ENCODE measurements at regions of chr6 and their contacts with region 1.

Region 1: DNA sequence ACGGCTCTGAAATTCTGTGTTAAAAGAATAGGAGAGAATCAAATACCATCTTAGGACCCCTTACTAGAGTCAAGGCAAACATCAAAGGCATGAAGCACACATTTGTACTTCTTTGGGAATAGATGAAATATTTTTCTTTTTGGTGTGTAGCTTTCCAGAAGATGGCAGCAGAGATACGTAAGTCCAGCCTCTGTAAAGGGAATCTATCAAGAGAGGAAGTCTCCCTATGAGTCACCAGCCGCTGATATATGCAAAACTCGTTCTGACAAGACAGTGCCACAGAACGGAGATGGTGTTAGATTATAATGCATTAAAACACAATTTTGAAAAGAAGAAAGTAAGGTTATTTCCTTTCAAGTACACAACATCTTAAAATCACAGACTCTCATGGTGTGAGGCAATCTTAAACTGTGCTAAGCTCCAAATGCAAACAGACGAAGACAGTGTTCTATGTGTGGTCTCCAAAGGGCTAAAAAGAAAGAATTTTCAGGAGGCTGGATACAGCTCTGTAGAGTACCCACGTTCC is 120.0 kb upstream of the AGPAT4 start:
- DNase-seq: peak; percentile 23 to 84
- ATAC-seq: peak; percentile 95 to 98 (median 97)
- H3K4me3 ChIP-seq: no peak overlapping the region
- H3K4me3 Mint-ChIP-seq: no peak overlapping the region
- H3K27ac ChIP-seq: peak overlapping the region; percentile 41
- H3K27ac Mint-ChIP-seq: no peak overlapping the region
- H3K4me1 ChIP-seq: peaks cover 15% of the 10 kb centered on the region
- H3K4me1 Mint-ChIP-seq: peaks cover 7 to 8% of the 10 kb centered on the region in 2 donors
- H3K27me3 ChIP-seq: no peaks in the 10 kb centered on the region
- H3K27me3 Mint-ChIP-seq: peaks cover 3 to 23% of the 10 kb centered on the region in 2 donors
- CTCF ChIP-seq: peak; percentile 76

Region 2: DNA sequence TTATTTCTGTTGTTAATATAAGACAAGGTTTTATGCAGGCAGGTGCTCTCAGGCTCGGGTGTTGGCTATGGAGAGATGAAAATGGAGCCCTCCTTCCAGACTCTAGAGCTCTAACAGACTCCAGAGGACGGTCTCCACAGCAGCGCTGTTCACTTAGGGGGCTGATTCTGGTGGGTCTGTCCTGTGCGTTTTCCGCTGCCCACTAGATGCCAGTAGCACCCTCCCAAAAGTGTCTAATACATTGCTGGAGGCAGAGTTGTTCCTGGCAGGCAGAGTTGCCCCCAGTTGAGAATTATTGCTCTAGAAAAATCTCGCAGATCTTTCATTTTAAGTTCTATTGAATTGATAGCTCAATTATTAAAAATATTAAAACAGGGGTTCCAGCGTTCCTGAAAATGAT is 292.4 kb before region 1 on chr6:
- intact Hi-C with region 1: no loop called
- DNase-seq: peak in 1 of 2 donors; percentile 22
- ATAC-seq: peak in 2 of 3 donors; percentile 50 to 52
- H3K4me3 ChIP-seq: no peak overlapping the region
- H3K4me3 Mint-ChIP-seq: no peak overlapping the region
- H3K27ac ChIP-seq: no peak overlapping the region
- H3K27ac Mint-ChIP-seq: no peak overlapping the region
- H3K4me1 ChIP-seq: no peaks in the 10 kb centered on the region
- H3K4me1 Mint-ChIP-seq: peaks cover 0 to 6% of the 10 kb centered on the region in 2 donors
- H3K27me3 ChIP-seq: no peaks in the 10 kb centered on the region
- H3K27me3 Mint-ChIP-seq: no peaks in the 10 kb centered on the region
- CTCF ChIP-seq: peak; percentile 2

Region 3: GRCh38 chr6:161694995-161695394 is 301.1 kb after region 1 on chr6:
- intact Hi-C with region 1: loop called (anchors 1 kb)
- DNase-seq: peak in 1 of 2 donors; percentile 11
- ATAC-seq: peak in 1 of 3 donors; percentile 48
- H3K4me3 ChIP-seq: no peak overlapping the region
- H3K4me3 Mint-ChIP-seq: no peak overlapping the region
- H3K27ac ChIP-seq: no peak overlapping the region
- H3K27ac Mint-ChIP-seq: no peak overlapping the region
- H3K4me1 ChIP-seq: no peaks in the 10 kb centered on the region
- H3K4me1 Mint-ChIP-seq: peaks cover 4 to 6% of the 10 kb centered on the region in 2 donors
- H3K27me3 ChIP-seq: no peaks in the 10 kb centered on the region
- H3K27me3 Mint-ChIP-seq: peaks cover 7% of the 10 kb centered on the region in 2 donors
- CTCF ChIP-seq: peak; percentile 12

Measured in natural killer cell (primary cell).